ENCODE measurements at regions of chr20 and their contacts with region 1.

Region 1: DNA sequence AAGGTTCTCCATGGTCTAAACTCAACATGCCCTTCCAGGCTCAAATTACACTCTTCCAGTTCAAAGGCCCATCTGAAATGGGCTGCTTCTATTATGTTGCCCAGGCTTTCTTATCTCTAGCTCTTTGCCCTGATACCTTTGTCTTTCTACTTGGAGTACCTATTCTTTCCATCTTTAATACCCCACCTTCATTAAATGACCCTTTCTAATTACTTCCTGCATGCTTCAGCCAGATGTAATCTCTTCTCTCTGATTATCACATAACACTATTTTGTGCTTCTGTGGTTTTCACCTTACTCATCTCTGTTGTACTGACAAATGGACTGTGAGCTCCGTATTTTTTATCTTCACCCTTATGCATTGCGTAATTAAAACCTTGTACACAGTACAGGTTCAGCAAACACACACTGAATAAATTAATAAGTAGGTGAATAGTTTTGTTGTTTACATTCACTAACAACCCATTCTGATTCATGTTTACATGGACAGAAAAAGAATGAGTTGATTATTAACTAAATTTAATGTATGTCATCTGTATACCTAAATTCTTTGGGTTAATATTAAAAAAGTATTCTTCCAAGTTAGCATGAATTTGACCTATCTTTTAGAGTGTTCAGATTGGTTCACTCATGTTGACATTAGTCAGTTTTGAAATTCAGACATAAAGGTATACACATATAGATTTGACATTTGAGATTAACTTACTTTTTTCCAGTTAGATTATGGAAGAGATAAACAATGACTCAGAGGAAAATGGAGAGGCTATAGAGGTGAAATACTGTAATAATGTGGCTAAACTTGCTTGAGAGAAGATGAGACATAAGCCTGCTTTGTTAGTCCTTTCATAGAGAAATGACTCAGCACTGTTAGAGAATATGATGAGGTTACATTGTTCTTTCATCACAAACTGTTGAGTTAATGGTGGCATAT is 541.6 kb upstream of the FLRT3 start:
- DNase-seq: peak in 1 of 2 experiments; percentile 88
- H3K4me3 ChIP-seq: no peak overlapping the region
- H3K27ac ChIP-seq: peak overlapping the region; percentile 93
- H3K4me1 ChIP-seq: peaks cover 7% of the 10 kb centered on the region; the same call in 1 of the 2 replicates
- H3K27me3 ChIP-seq: no peaks in the 10 kb centered on the region
- CTCF ChIP-seq: no peak

Region 2: GRCh38 chr20:14902432-14903089 is 23.5 kb after region 1 on chr20:
- CTCF ChIA-PET with region 1: no interaction called
- POLR2A ChIA-PET with region 1: no interaction called
- intact Hi-C with region 1: no loop called
- DNase-seq: no peak
- H3K4me3 ChIP-seq: no peak overlapping the region
- H3K27ac ChIP-seq: no peak overlapping the region
- H3K4me1 ChIP-seq: no peaks in the 10 kb centered on the region
- H3K27me3 ChIP-seq: no peaks in the 10 kb centered on the region
- CTCF ChIP-seq: no peak

Region 3: DNA sequence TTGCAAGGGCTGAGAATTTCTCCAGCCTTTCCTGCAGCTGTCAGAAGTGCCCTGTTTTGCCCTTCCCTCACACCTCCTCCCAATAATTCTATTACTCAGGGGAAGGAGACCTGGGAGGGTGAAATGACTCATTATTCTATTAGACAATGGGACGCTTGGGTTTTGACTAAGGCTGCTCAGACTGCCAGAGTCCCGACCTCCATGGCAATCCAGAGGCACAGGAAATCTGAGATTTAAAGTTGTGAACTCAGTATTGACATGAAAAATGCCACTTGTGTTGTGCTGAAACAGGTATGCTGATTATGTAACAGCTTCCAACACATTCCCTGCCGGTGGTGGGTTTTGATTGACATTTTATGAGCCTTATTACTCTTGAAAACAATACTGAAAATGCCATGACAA is 84.2 kb after region 1 on chr20:
- CTCF ChIA-PET with region 1: no interaction called
- POLR2A ChIA-PET with region 1: no interaction called
- intact Hi-C with region 1: loop called (anchors 10 kb)
- DNase-seq: peak; percentile 48 to 90
- H3K4me3 ChIP-seq: peak overlapping the region; percentile 29; the same call in 1 of the 2 replicates
- H3K27ac ChIP-seq: peak overlapping the region; percentile 69
- H3K4me1 ChIP-seq: peaks cover 6% of the 10 kb centered on the region; the same call in 1 of the 2 replicates
- H3K27me3 ChIP-seq: no peaks in the 10 kb centered on the region
- CTCF ChIP-seq: no peak

Region 4: DNA sequence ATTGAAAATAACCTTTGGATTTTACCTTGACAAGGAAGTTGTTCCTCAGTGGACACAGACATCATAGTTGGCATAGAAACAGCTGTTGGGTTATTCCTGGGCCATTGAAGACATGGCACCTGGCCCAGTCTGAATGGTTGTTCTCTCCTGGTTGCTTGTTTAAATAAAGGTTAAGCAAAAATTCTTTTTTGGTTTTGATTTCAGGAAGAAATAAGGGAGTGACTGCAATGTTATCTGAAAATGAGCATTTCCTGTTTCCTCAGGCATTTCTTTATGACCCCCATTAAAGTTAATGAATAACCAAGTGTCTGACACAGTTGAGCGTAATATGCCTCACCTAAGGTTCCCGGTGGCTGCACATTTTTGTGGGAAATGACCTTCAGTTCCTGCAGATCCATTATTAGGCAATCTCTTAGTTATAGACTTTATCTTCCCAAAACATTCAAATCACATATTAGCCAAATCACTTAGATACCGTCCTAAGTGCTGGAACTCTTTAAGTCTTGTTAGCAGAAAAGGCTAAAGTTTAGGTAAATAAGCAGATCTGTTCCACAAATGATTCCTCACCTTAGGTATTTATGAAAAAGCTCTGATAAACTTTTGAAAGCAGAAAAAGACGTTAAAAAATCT is 107.1 kb after region 1 on chr20:
- CTCF ChIA-PET with region 1: no interaction called
- POLR2A ChIA-PET with region 1: no interaction called
- intact Hi-C with region 1: loop called (anchors 1 kb)
- DNase-seq: peak; percentile 73 to 90
- H3K4me3 ChIP-seq: no peak overlapping the region
- H3K27ac ChIP-seq: peak overlapping the region; percentile 60
- H3K4me1 ChIP-seq: peaks cover 19% of the 10 kb centered on the region
- H3K27me3 ChIP-seq: no peaks in the 10 kb centered on the region
- CTCF ChIP-seq: no peak

Region 5: GRCh38 chr20:15039103-15039752 is 160.2 kb after region 1 on chr20:
- CTCF ChIA-PET with region 1: no interaction called
- POLR2A ChIA-PET with region 1: no interaction called
- intact Hi-C with region 1: loop called (anchors 1 kb)
- DNase-seq: peak; percentile 43 to 85
- H3K4me3 ChIP-seq: no peak overlapping the region
- H3K27ac ChIP-seq: peak overlapping the region; percentile 74
- H3K4me1 ChIP-seq: peaks cover 17% of the 10 kb centered on the region
- H3K27me3 ChIP-seq: no peaks in the 10 kb centered on the region
- CTCF ChIP-seq: no peak

Region 6: GRCh38 chr20:15191082-15191723 is 312.2 kb after region 1 on chr20:
- CTCF ChIA-PET with region 1: no interaction called
- POLR2A ChIA-PET with region 1: no interaction called
- intact Hi-C with region 1: no loop called
- DNase-seq: no peak
- H3K4me3 ChIP-seq: no peak overlapping the region
- H3K27ac ChIP-seq: no peak overlapping the region
- H3K4me1 ChIP-seq: no peaks in the 10 kb centered on the region
- H3K27me3 ChIP-seq: no peaks in the 10 kb centered on the region
- CTCF ChIP-seq: no peak

Measured in PC-9 (cell line).